PC-9 (cell line): ENCODE measurements at regions of chr3 and their contacts with region 1.

Region 1: GRCh38 chr3:183172051-183172639 is 9.6 kb upstream of the LAMP3 start:
- DNase-seq: peak in 1 of 2 experiments; percentile 6
- H3K4me3 ChIP-seq: no peak overlapping the region
- H3K27ac ChIP-seq: no peak overlapping the region
- H3K4me1 ChIP-seq: no peaks in the 10 kb centered on the region
- H3K27me3 ChIP-seq: no peaks in the 10 kb centered on the region
- CTCF ChIP-seq: no peak

Region 2: GRCh38 chr3:182971637-182972036 is 200.5 kb before region 1 on chr3:
- CTCF ChIA-PET with region 1: no interaction called
- POLR2A ChIA-PET with region 1: interaction called, 12 read pairs
- intact Hi-C with region 1: no loop called
- DNase-seq: no peak
- H3K4me3 ChIP-seq: no peak overlapping the region
- H3K27ac ChIP-seq: no peak overlapping the region; the same call in 1 of the 2 replicates
- H3K4me1 ChIP-seq: peaks cover 32% of the 10 kb centered on the region
- H3K27me3 ChIP-seq: no peaks in the 10 kb centered on the region
- CTCF ChIP-seq: no peak